Lower leg skin (tissue), 4 donors: ENCODE measurements at regions of chr1 and their contacts with region 1.

Region 1: DNA sequence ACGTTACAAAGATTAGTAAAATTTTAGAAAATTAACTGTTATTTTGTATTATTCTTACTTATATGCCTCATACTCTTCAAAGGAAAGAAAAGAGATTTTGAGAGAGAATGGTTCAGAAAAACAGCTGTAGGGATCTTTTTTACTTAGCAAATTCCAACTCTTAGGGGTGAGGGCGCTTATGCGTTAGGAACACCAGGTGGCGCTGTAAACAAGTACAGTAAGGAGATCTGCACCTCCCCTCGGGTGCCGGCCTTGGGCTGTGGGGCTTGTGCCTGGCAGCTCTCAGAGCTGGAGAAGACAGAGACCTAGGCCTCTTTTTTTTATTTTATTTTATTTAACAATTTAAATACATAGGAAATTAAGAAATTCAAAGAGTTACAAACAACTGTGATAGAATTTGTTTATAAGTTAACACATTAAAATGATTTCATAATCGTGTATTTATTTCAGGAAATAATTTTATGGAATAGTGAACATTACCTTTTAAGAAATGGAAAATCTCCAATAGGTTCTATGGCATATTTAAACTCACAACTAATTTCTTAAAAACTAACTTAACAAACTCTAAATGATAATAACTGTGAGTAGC is 32.6 kb downstream of the UTP25 start:
- DNase-seq: peak; percentile 55 to 91
- H3K4me3 ChIP-seq: no peak overlapping the region
- CTCF ChIP-seq: no peak
- POLR2A ChIP-seq: no peak

Region 2: DNA sequence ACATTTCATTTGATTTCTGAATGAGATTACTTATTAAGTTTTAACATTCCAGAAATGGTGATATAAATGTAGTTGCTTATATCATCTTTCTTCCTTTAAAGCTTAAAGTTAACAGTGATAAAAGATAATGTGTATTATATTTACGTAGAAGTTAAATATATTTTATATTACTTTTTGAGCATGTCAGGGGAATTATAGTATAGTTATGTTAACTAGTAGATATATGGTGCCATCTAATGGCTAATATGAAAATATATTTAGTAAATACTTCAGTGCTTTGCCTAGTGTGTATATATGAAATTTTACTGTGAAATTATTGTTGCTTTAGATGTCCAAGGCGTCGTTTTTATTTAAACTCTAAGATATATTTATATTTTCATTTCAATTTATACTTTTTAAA is 129.1 kb after region 1 on chr1:
- intact Hi-C with region 1: loop called (anchors 5 kb)
- DNase-seq: no peak
- H3K4me3 ChIP-seq: no peak overlapping the region
- CTCF ChIP-seq: no peak
- POLR2A ChIP-seq: no peak